ENCODE measurements at regions of chr3 and their contacts with region 1.

Region 1: DNA sequence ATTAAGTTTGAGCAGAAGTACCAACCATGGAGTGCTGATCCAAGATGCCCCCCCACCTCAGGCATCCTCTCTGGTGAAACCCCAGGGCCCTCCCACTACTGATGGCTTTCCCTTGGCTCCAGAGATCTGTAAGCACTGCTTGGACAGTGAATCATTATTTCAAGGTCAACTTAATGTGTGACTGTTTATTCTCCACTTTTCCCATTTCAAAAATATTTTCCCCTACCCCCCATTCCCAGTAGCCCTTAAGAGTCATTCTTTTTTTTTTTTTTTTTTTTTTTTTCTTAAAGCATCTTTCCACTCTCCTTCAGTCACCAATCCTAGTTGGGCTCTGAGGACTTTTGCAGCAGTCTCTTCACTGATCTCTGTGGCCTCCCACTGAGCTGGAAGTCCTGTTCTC is 82.6 kb downstream of the PCCB start:
- DNase-seq: no peak
- ATAC-seq: no peak

Region 2: DNA sequence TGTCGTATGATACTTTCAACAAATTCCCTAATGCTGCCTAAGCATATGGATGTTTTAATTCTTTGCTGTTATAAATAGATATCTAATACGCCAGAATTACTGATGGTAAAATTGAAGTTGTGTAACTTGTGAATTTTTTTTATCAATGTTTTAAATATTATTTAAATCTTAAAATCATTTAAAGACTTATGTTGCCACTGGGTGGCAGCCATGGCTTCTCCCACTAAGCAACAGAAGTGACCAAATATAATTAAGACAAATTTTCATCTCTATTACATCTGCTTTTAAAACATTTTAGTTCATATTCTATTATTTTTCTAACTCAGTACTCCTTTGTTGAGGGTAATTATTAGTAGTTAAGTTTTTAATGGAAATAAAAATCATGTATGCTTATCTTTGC is 616.9 kb after region 1 on chr3:
- intact Hi-C with region 1: loop called (anchors 5 kb)
- DNase-seq: no peak
- ATAC-seq: no peak

Measured in left ventricle myocardium superior (tissue), 1 donor.